ENCODE measurements at regions of chr11 and their contacts with region 1.

Region 1: DNA sequence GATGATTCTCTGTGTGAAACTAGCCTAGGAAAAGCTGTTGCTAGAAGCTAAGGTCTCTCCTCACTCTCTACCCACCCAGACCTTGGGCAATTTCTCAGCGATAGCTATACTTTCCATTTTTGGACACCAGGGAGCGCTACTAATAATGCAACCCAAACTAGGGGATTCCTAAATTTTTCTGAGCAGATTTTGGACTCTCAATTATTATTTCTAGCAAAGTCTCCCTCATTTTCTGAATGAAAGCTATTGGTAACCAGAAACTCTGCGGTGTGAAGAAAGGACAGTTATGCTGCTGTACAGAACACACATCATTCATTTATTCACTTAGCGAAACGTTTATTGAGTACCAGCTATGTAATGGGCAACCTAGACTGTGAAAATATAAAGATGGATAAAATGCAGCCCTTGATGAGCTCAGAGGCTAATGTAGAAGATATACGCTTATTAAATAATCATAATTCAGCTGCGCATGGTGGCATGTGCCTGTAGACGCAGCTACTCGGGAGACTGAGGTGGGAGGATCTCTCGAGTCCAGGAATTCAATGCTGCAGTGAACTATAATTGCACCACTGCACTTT is 6.1 kb upstream of the STIM1 start:
- DNase-seq: no peak
- ATAC-seq: peak; percentile 80
- H3K4me3 ChIP-seq: no peak overlapping the region
- H3K27ac ChIP-seq: no peak overlapping the region
- H3K4me1 ChIP-seq: peaks cover 12% of the 10 kb centered on the region
- H3K27me3 ChIP-seq: no peaks in the 10 kb centered on the region
- CTCF ChIP-seq: peak; percentile 58 to 74 (median 67)
- EP300 ChIP-seq: no peak
- POLR2A ChIP-seq: no peak
- RAD21 ChIP-seq: peak; percentile 75

Region 2: DNA sequence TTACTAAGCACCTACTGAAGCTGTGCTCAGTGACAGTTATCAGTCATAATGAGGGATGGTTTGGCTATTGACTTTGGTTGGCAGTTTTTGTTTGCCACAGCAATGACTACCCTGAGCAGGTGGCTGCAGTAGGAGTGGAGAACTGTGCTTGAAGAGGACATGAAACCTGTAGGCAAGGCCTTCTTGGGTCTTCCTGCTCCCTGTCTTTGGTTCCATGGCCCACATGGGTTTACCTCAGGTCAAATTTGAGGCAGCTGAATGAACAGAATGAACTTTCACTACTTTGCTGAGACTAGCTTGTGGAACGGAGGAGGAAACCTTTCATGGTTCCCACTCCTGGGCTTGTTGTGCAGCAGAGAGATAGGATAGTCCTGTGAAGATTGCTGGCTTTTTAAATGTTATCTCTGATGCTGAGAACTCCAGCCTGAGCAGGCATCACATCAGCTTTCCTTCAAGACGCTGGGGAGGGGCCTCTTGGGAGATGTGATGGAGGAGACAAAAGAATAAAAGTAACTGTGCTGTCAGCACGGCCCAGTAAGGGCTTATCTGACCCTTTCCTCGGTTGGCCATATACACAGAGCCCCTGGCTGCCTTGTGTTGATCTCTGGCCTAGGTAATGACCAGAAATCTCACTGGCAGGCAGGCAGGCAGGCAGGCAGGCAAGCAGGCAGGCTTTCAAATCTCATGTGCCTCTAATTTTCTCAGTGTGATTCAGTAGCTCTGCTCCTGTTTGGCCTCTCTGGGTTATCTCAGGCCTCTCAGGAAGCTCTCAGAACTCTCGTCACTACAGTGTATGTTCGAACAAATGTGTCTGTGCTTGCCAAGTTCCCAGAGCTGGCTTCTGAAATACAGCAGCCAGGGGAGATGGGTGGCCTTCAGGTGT is 18.1 kb after region 1 on chr11:
- CTCF ChIA-PET with region 1: interaction called, 1,047 read pairs
- POLR2A ChIA-PET with region 1: interaction called, 405 read pairs
- RAD21 ChIA-PET with region 1: interaction called, 253 read pairs
- SMC1A ChIA-PET with region 1: interaction called, 633 read pairs
- in situ Hi-C with region 1: no loop called
- intact Hi-C with region 1: no loop called
- DNase-seq: peak; percentile 66
- ATAC-seq: peak; percentile 57
- H3K4me3 ChIP-seq: peak overlapping the region; percentile 28; the same call in 1 of the 2 replicates
- H3K27ac ChIP-seq: peak overlapping the region; percentile 82
- H3K4me1 ChIP-seq: peaks cover 65% of the 10 kb centered on the region
- H3K27me3 ChIP-seq: no peaks in the 10 kb centered on the region
- CTCF ChIP-seq: no peak
- EP300 ChIP-seq: no peak
- POLR2A ChIP-seq: no peak
- RAD21 ChIP-seq: no peak

Region 3: DNA sequence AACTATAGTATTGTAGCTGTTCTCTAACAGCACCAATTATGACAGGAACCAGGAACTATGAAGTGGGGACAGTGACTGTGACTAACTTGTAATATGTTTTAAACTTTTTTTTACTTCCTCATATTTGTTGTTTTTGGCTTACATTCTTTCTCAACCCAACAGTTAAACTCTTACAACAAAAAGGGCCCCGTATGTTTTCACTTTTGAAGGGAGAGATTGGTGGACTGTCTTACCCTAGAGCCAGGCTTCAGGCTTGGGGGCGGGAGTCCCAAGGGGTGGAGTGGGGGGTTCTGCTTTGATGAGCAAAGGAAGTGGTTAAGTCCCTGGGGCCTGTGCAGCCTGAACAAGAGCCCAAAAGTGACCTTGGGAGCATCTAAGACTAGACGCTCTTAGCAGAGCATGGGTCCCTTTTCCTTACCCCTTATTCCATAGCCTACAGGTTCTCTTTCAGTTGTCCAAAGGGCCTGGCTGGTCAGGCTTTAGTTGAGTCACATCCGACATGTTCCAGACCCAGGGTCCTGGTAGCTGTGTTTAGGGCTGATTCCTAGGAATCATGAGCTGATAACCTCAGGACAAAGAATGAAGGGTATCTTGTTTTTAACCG is 44.8 kb after region 1 on chr11:
- CTCF ChIA-PET with region 1: interaction called, 47 read pairs
- POLR2A ChIA-PET with region 1: interaction called, 23 read pairs
- RAD21 ChIA-PET with region 1: interaction called, 134 read pairs
- SMC1A ChIA-PET with region 1: interaction called, 43 read pairs
- in situ Hi-C with region 1: no loop called
- intact Hi-C with region 1: no loop called
- DNase-seq: peak; percentile 91
- ATAC-seq: peak; percentile 98
- H3K4me3 ChIP-seq: peak overlapping the region; percentile 70
- H3K27ac ChIP-seq: peak overlapping the region; percentile 98
- H3K4me1 ChIP-seq: peaks cover 23% of the 10 kb centered on the region
- H3K27me3 ChIP-seq: no peaks in the 10 kb centered on the region
- CTCF ChIP-seq: no peak
- EP300 ChIP-seq: peak; percentile 81 to 85
- POLR2A ChIP-seq: peak; percentile 56
- RAD21 ChIP-seq: peak; percentile 36; the same call in 1 of the 2 replicates

Region 4: GRCh38 chr11:3947061-3947460 is 97.7 kb after region 1 on chr11:
- CTCF ChIA-PET with region 1: interaction called, 15 read pairs
- POLR2A ChIA-PET with region 1: interaction called, 3 read pairs
- RAD21 ChIA-PET with region 1: interaction called, 16 read pairs
- SMC1A ChIA-PET with region 1: interaction called, 41 read pairs
- in situ Hi-C with region 1: no loop called
- intact Hi-C with region 1: loop called (anchors 2 kb)
- DNase-seq: peak; percentile 76
- ATAC-seq: peak; percentile 78
- H3K4me3 ChIP-seq: 0 out of 2 replicates have a peak overlapping the region, but pooled peaks have one; percentile 19
- H3K27ac ChIP-seq: peak overlapping the region; percentile 52
- H3K4me1 ChIP-seq: peaks cover 55% of the 10 kb centered on the region
- H3K27me3 ChIP-seq: no peaks in the 10 kb centered on the region
- CTCF ChIP-seq: no peak
- EP300 ChIP-seq: no peak
- POLR2A ChIP-seq: no peak
- RAD21 ChIP-seq: no peak

Region 5: DNA sequence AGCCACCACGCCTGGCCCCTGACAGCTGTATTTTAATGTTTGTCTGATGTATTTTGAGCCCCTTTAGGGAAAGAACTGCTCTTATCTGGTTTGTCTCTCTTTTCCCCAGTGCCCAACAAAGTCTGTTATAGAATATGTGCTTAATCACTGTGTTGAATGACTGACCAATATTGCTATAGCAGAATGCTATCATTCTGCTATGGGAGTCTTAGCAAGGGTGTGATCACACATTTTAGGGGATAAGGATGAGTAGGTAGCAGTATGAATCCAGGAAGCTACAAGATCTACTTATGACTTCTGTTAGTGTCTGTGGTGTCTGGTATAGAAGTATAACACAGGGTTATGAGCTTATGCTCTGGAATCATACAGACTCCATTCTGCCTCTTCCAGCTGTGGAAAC is 127.7 kb after region 1 on chr11:
- CTCF ChIA-PET with region 1: interaction called, 18 read pairs
- POLR2A ChIA-PET with region 1: no interaction called
- RAD21 ChIA-PET with region 1: interaction called, 8 read pairs
- SMC1A ChIA-PET with region 1: interaction called, 7 read pairs
- in situ Hi-C with region 1: no loop called
- intact Hi-C with region 1: no loop called
- DNase-seq: no peak
- ATAC-seq: no peak
- H3K4me3 ChIP-seq: no peak overlapping the region
- H3K27ac ChIP-seq: no peak overlapping the region
- H3K4me1 ChIP-seq: no peaks in the 10 kb centered on the region
- H3K27me3 ChIP-seq: no peaks in the 10 kb centered on the region
- CTCF ChIP-seq: no peak
- EP300 ChIP-seq: no peak
- POLR2A ChIP-seq: no peak
- RAD21 ChIP-seq: no peak

Region 6: DNA sequence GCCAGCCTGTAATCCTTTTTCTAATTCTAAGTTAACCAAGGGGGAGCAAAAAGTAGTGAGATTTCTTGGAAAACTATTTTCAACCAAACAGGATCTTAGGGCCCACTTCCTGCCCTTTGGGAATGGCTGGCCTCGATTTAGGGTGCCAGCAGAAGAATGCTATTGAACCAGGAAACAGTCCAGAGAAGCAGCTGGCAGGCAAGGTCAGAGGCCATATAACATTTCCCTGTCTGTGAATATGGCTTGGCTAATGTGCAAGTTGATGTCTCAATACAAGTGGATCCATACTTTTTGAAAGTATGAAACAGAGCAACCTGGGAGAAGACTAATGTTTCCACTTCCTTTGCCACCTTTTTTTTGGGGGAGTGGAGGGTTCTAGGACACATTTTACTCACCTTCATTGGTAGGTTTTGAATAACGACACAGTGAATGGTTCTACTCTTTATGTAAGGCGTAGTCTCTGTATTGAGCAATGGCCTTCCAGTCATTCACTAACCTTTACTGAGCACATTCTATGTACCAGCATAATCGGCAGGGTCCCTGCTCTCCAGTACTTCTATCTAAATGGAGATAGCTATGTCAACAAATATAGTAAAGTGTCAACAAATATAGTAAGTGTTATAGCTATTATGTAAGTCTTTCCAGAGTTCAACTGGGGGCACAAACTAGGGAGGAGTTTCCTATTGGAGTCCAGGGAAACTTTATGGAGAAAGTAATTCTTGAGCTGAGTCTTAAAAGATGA is 211.0 kb after region 1 on chr11:
- CTCF ChIA-PET with region 1: interaction called, 979 read pairs
- POLR2A ChIA-PET with region 1: interaction called, 8 read pairs
- RAD21 ChIA-PET with region 1: interaction called, 605 read pairs
- SMC1A ChIA-PET with region 1: interaction called, 805 read pairs
- in situ Hi-C with region 1: loop called (anchors 5 kb)
- intact Hi-C with region 1: no loop called
- DNase-seq: no peak
- ATAC-seq: no peak
- H3K4me3 ChIP-seq: no peak overlapping the region
- H3K27ac ChIP-seq: no peak overlapping the region
- H3K4me1 ChIP-seq: peaks cover 19% of the 10 kb centered on the region
- H3K27me3 ChIP-seq: no peaks in the 10 kb centered on the region
- CTCF ChIP-seq: no peak
- EP300 ChIP-seq: no peak
- POLR2A ChIP-seq: no peak
- RAD21 ChIP-seq: no peak

Region 7: DNA sequence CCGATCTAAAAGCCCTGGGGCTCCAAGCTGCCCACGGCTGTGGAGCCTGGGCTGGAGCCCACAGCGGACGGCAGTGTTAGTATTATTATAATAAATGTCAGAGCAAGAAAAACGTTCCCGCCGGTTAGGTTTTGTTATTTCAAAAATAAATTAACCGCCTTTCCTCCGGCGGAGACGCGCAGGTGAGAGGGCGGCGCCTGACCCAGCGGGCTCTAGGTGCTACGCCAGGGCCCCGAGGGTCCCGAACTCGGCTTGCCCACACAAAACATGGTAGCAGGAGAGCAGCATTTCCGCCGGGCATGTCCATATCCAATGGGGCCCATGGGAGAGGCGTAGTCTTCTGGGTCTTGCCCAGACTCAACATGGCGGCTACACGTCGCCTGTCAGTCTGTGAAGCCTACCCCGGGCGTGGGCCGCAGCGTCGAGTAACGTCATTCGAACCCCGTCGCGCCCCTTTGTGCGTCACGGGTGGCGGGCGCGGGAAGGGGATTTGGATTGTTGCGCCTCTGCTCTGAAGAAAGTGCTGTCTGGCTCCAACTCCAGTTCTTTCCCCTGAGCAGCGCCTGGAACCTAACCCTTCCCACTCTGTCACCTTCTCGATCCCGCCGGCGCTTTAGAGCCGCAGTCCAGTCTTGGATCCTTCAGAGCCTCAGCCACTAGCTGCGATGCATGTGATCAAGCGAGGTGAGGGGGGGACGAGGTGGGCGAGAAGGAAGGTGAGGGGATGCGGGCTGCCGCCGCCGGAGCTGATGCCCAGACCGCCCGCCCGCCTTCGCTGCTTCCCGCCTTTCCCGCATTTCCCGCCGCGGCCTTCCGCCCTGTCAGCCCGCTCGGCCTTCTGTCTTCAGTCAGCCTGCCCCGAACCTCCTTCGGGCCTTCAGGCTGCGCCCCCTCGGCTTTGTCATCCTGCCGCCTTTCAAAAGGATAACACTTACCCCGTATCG is 245.2 kb after region 1 on chr11 and contains the start of gene RRM1:
- CTCF ChIA-PET with region 1: interaction called, 12 read pairs
- POLR2A ChIA-PET with region 1: interaction called, 4 read pairs
- RAD21 ChIA-PET with region 1: interaction called, 9 read pairs
- SMC1A ChIA-PET with region 1: interaction called, 12 read pairs
- in situ Hi-C with region 1: no loop called
- intact Hi-C with region 1: no loop called
- DNase-seq: peak; percentile 82
- ATAC-seq: peak; percentile 97
- H3K4me3 ChIP-seq: peak within 1 kb of the TSS; percentile 90
- H3K27ac ChIP-seq: peak within 1 kb of the TSS; percentile 95
- H3K4me1 ChIP-seq: peaks cover 8% of the 10 kb centered on the region
- H3K27me3 ChIP-seq: no peaks in the 10 kb centered on the region
- CTCF ChIP-seq: no peak
- EP300 ChIP-seq: no peak
- POLR2A ChIP-seq: peak; percentile 84
- RAD21 ChIP-seq: no peak
- polyA plus RNA-seq, gene RRM1: 121 to 177 TPM

Measured in GM12878 (cell line).